ENCODE measurements at regions of chr11 and their contacts with region 1.

Region 1: GRCh38 chr11:111694851-111695250 is 71.3 kb downstream of the PPP2R1B start:
- DNase-seq: no peak
- ATAC-seq: peak; percentile 28

Region 2: GRCh38 chr11:111635706-111636045 is 59.2 kb before region 1 on chr11:
- intact Hi-C with region 1: loop called (anchors 5 kb)
- DNase-seq: no peak
- ATAC-seq: peak; percentile 96

Measured in Right ventricle myocardium inferior (tissue), 1 donor.